CD4-positive, alpha-beta memory T cell (primary cell): ENCODE measurements at regions of chr17 and their contacts with region 1.

Region 1: GRCh38 chr17:49556223-49556971 is 19.3 kb upstream of the NXPH3 start:
- DNase-seq: peak; percentile 69 to 80 (median 74)
- H3K4me3 ChIP-seq: no peak overlapping the region
- H3K4me3 Mint-ChIP-seq: peak overlapping the region in 1 of 8 donors; percentile 55
- H3K27ac ChIP-seq: no peak overlapping the region
- H3K27ac Mint-ChIP-seq: no peak overlapping the region
- H3K4me1 ChIP-seq: peaks cover 6% of the 10 kb centered on the region
- H3K4me1 Mint-ChIP-seq: peaks cover 5 to 7% (median 5%) of the 10 kb centered on the region in 4 donors
- H3K27me3 ChIP-seq: no peaks in the 10 kb centered on the region
- H3K27me3 Mint-ChIP-seq: peaks cover 1 to 3% of the 10 kb centered on the region in 2 donors

Region 2: DNA sequence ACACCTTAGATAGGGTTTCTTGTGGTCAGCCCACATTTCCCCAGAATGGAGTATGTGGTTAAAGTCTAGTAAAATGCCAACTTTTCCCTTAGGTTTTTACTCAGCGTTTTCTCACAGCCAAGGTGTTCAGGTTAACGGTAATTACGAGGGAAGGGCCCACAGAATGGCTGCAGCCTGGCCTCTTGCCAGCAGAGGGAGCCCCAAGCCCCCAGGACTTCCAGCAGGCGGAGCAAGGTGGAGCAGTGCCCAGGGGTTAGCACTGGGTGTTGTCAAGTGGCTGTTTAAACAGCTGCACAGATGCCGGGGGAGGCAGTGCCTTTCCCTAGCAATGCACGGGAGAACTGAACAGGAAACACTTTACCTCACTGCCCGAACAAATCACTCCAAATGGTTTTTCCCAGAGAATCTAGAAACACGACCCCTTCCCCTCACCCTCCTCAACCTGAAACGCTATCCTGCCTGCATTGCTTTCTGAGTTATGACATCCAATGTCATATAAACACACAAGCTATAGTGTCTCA is 148.4 kb before region 1 on chr17:
- CTCF ChIA-PET with region 1: interaction called, 163 read pairs
- POLR2A ChIA-PET with region 1: interaction called, 4 read pairs
- intact Hi-C with region 1: loop called (anchors 1 kb)
- DNase-seq: peak; percentile 75 to 80 (median 78)
- H3K4me3 ChIP-seq: no peak overlapping the region
- H3K4me3 Mint-ChIP-seq: peak overlapping the region in 1 of 8 donors; percentile 43
- H3K27ac ChIP-seq: no peak overlapping the region
- H3K27ac Mint-ChIP-seq: peak overlapping the region; percentile 1 to 72 (median 65)
- H3K4me1 ChIP-seq: peaks cover 10% of the 10 kb centered on the region
- H3K4me1 Mint-ChIP-seq: peaks cover 10 to 30% (median 15%) of the 10 kb centered on the region in 4 donors
- H3K27me3 ChIP-seq: no peaks in the 10 kb centered on the region
- H3K27me3 Mint-ChIP-seq: no peaks in the 10 kb centered on the region

Region 3: DNA sequence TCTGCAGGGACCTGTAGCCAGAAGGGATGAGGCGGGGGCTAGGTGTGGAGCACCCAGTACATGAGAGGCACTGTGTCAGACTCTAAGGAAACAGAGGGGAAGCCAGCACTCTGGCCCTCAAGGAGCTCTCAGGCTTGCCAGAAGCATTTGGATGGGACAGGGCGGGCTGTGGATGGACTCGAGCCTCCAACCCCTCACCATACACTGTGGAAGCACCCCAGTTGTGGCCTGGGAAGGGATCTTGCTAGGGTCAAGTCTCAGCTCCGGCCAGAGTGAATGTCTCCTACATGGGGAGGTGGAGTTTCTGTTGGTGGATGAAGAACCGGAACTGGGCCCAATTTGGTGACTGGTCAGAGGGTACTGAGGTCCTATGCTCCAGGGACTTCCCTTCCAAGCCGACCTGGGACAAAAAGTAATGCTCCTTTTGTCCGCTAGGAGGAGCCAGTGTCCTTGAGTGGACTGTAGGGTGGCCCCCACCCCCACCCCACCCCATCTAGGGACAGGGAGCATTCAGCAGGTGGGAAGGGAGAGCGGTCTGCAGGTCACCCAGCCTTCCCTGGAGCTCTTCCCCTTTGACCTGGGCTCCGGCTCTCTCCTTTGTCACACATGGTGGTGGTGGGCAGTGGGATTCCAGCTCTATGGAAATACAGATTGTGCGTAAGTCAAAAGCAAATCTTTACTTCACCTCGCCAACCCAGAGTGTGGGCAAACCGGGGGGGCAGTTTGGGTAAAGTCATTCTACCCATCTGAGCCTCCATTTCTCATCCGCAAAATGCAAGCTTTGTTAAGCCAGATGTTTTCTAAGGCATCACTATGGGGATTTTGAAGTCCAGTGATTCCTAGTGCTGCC is 121.4 kb before region 1 on chr17:
- CTCF ChIA-PET with region 1: interaction called, 83 read pairs
- POLR2A ChIA-PET with region 1: no interaction called
- intact Hi-C with region 1: loop called (anchors 1 kb)
- DNase-seq: peak in 4 of 5 donors; percentile 7 to 35 (median 24)
- H3K4me3 ChIP-seq: no peak overlapping the region
- H3K4me3 Mint-ChIP-seq: no peak overlapping the region
- H3K27ac ChIP-seq: no peak overlapping the region
- H3K27ac Mint-ChIP-seq: no peak overlapping the region
- H3K4me1 ChIP-seq: no peaks in the 10 kb centered on the region
- H3K4me1 Mint-ChIP-seq: no peaks in the 10 kb centered on the region
- H3K27me3 ChIP-seq: peaks cover 9% of the 10 kb centered on the region
- H3K27me3 Mint-ChIP-seq: peaks cover 17 to 33% of the 10 kb centered on the region in 2 donors

Region 4: GRCh38 chr17:49545806-49546545 is 10.4 kb before region 1 on chr17:
- CTCF ChIA-PET with region 1: interaction called, 22 read pairs
- POLR2A ChIA-PET with region 1: no interaction called
- intact Hi-C with region 1: no loop called
- DNase-seq: no peak
- H3K4me3 ChIP-seq: no peak overlapping the region
- H3K4me3 Mint-ChIP-seq: no peak overlapping the region
- H3K27ac ChIP-seq: no peak overlapping the region
- H3K27ac Mint-ChIP-seq: no peak overlapping the region
- H3K4me1 ChIP-seq: no peaks in the 10 kb centered on the region
- H3K4me1 Mint-ChIP-seq: no peaks in the 10 kb centered on the region
- H3K27me3 ChIP-seq: no peaks in the 10 kb centered on the region
- H3K27me3 Mint-ChIP-seq: peaks cover 5 to 12% of the 10 kb centered on the region in 2 donors

Region 5: GRCh38 chr17:49677933-49678847 is 121.8 kb after region 1 on chr17 and contains the start of gene SPOP:
- CTCF ChIA-PET with region 1: no interaction called
- POLR2A ChIA-PET with region 1: no interaction called
- intact Hi-C with region 1: no loop called
- DNase-seq: peak; percentile 99 to 100 (median 100)
- H3K4me3 ChIP-seq: peak within 1 kb of the TSS; percentile 95 to 100
- H3K4me3 Mint-ChIP-seq: peak within 1 kb of the TSS; percentile 91 to 99 (median 94)
- H3K27ac ChIP-seq: peak within 1 kb of the TSS; percentile 94
- H3K27ac Mint-ChIP-seq: peak within 1 kb of the TSS; percentile 93 to 99 (median 98)
- H3K4me1 ChIP-seq: peaks cover 42% of the 10 kb centered on the region
- H3K4me1 Mint-ChIP-seq: peaks cover 35 to 52% (median 42%) of the 10 kb centered on the region in 4 donors
- H3K27me3 ChIP-seq: no peaks in the 10 kb centered on the region
- H3K27me3 Mint-ChIP-seq: peaks cover 0 to 1% of the 10 kb centered on the region in 2 donors
- total RNA-seq, gene SPOP: 83.1 to 86.1 TPM

Region 6: GRCh38 chr17:49694847-49695683 is 138.7 kb after region 1 on chr17:
- CTCF ChIA-PET with region 1: interaction called, 10 read pairs
- POLR2A ChIA-PET with region 1: interaction called, 3 read pairs
- intact Hi-C with region 1: no loop called
- DNase-seq: peak; percentile 52 to 70 (median 61)
- H3K4me3 ChIP-seq: no peak overlapping the region
- H3K4me3 Mint-ChIP-seq: peak overlapping the region in 3 of 8 donors; percentile 1 to 41 (median 4)
- H3K27ac ChIP-seq: no peak overlapping the region
- H3K27ac Mint-ChIP-seq: peak overlapping the region; percentile 65 to 90 (median 83)
- H3K4me1 ChIP-seq: peaks cover 19% of the 10 kb centered on the region
- H3K4me1 Mint-ChIP-seq: peaks cover 22 to 51% (median 30%) of the 10 kb centered on the region in 4 donors
- H3K27me3 ChIP-seq: no peaks in the 10 kb centered on the region
- H3K27me3 Mint-ChIP-seq: no peaks in the 10 kb centered on the region